Activated CD4-positive, alpha-beta T cell treated with anti-CD3 and anti-CD28 coated beads, Interleukin-2, amount 10 ng/mL, durations not matched to agents 7 days and 5 days (primary cell): ENCODE measurements at regions of chr5 and their contacts with region 1.

Region 1: GRCh38 chr5:32489791-32490582 is 45.4 kb upstream of the ZFR start:
- DNase-seq: peak; percentile 78
- H3K4me3 Mint-ChIP-seq: no peak overlapping the region
- H3K27ac Mint-ChIP-seq: no peak overlapping the region
- H3K4me1 Mint-ChIP-seq: peaks cover 2% of the 10 kb centered on the region
- H3K27me3 Mint-ChIP-seq: no peaks in the 10 kb centered on the region

Region 2: DNA sequence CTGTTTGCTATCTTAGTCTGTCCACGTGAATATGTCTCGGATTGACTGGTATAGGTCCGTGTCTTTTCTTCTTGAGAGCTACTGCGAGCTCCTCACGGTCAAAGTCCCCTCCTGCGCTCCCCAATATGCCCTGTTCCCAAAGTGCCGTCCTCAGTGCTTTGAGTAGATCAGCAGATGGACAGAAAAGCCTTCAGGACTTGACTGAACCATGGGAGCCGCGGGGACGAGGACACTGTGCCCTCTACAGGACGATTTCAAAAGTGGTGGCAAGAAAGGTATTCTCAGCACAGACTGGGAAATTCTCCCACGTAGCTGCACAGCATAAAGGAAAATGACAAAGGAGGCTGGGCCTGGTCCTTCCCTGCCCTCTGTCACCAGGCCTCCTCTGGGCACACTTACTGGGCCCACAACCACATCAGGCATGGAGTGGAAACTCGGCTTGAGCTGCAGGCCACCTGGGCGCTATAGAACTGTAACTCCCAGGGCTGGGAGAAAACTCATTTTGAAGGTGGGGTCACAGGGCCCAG is 160.6 kb before region 1 on chr5:
- CTCF ChIA-PET with region 1: no interaction called
- POLR2A ChIA-PET with region 1: no interaction called
- DNase-seq: peak; percentile 61
- H3K4me3 Mint-ChIP-seq: no peak overlapping the region
- H3K27ac Mint-ChIP-seq: no peak overlapping the region
- H3K4me1 Mint-ChIP-seq: peaks cover 5% of the 10 kb centered on the region
- H3K27me3 Mint-ChIP-seq: no peaks in the 10 kb centered on the region

Region 3: GRCh38 chr5:32504989-32505596 is 15.1 kb after region 1 on chr5:
- CTCF ChIA-PET with region 1: interaction called, 13 read pairs
- POLR2A ChIA-PET with region 1: interaction called, 3 read pairs
- DNase-seq: no peak
- H3K4me3 Mint-ChIP-seq: no peak overlapping the region
- H3K27ac Mint-ChIP-seq: no peak overlapping the region
- H3K4me1 Mint-ChIP-seq: peaks cover 8% of the 10 kb centered on the region
- H3K27me3 Mint-ChIP-seq: peaks cover 13% of the 10 kb centered on the region